ENCODE measurements at regions of chr13 and their contacts with region 1.

Region 1: GRCh38 chr13:42594970-42595571 is 21.1 kb downstream of the TNFSF11 start:
- DNase-seq: peak; percentile 48
- H3K4me3 ChIP-seq: no peak overlapping the region
- H3K27ac ChIP-seq: no peak overlapping the region
- H3K4me1 ChIP-seq: no peaks in the 10 kb centered on the region
- H3K27me3 ChIP-seq: no peaks in the 10 kb centered on the region
- CTCF ChIP-seq: peak; percentile 77 to 89

Region 2: DNA sequence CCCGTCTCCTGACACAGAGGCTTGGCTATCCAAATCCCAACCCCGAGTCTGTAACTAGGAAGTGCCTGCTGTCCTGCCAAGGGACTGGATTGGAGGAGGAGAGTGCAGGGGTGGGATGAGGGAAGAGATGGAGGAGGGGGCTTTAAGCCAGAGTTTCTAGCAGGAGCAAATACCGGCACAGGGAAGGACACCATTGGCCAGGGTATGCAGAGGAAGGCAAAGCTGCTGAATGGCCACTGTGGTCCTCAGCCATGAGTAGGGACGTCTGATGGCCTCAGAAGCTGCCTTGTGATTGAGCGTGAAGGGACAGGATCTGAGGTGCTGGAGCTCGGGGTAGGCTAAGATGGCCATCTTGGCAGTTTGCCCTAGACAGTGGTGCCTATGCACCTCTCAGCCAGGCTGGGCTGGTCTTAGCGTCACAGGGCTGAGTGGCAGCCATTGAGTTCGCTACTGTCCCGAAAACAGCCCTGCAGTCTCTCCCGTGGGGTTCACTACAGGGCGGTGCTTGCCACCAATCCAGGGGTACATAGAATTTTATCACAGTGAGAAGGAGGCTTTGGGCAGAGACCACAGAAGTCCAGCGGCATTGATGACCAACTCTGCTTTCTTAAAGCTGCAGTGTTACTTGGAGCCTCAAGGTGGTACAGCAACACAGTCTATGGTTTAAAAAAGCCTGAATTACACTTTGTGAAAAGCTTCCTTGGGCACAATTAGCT is 261.3 kb before region 1 on chr13:
- CTCF ChIA-PET with region 1: no interaction called
- dilution Hi-C with region 1: no loop called
- in situ Hi-C with region 1: loop called in 1 of 2 experiments (anchors 25 kb)
- intact Hi-C with region 1: loop called (anchors 2 kb)
- DNase-seq: peak; percentile 17
- H3K4me3 ChIP-seq: no peak overlapping the region
- H3K27ac ChIP-seq: no peak overlapping the region
- H3K4me1 ChIP-seq: no peaks in the 10 kb centered on the region
- H3K27me3 ChIP-seq: peaks cover 2% of the 10 kb centered on the region
- CTCF ChIP-seq: peak; percentile 44 to 60

Region 3: DNA sequence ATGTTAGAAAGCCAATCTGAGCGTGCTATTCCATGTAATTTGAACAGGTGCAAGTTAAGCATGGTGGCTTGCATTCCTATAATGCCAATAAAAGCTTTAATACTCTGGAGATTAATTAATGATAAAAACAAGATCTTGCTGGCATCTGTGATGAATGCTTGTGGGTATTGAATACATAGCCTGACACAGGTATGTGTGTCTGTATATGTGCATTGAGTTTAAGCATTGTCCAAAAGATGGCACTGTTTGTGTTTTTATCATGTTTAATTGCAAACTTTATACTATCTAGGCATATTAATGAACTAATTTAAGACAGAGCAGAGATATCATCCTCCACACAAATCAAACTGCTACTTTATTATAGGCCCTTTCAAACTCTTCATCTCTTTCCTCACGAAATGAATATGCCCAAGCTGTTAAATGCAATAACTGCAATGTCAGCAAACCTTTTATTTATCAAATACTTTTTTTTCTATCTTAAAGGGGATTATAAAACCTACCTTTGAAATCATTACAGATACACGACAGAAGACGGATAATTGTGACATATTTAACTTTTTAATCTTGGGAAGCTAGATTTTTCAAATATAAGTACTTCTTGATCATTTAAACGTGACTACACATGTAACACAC is 65.4 kb after region 1 on chr13:
- CTCF ChIA-PET with region 1: interaction called, 4 read pairs
- dilution Hi-C with region 1: no loop called
- in situ Hi-C with region 1: no loop called
- intact Hi-C with region 1: loop called (anchors 2 kb)
- DNase-seq: peak; percentile 6
- H3K4me3 ChIP-seq: no peak overlapping the region
- H3K27ac ChIP-seq: no peak overlapping the region
- H3K4me1 ChIP-seq: no peaks in the 10 kb centered on the region
- H3K27me3 ChIP-seq: peaks cover 2% of the 10 kb centered on the region
- CTCF ChIP-seq: peak; percentile 32 to 49

Region 4: DNA sequence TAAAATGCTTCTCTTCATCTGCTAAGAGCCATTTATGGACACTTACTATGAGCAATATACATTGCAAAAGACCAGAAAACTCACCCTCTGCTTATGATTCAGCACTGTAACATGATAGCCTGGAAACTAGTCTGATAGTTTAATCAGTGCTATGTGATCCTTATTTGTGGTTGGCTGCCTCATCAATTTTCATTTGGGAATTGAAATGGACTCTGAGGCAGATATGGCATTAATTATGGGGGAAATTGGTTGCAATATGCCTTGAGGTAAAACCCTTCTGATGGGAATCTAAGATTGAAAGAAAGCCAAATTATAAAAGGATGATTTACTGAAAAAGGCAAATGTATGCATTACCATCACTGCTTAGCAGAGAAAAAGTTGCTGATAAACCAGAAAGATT is 219.8 kb after region 1 on chr13:
- CTCF ChIA-PET with region 1: no interaction called
- dilution Hi-C with region 1: no loop called
- in situ Hi-C with region 1: no loop called
- intact Hi-C with region 1: loop called (anchors 1 kb)
- DNase-seq: peak; percentile 70
- H3K4me3 ChIP-seq: no peak overlapping the region
- H3K27ac ChIP-seq: no peak overlapping the region
- H3K4me1 ChIP-seq: peaks cover 10% of the 10 kb centered on the region
- H3K27me3 ChIP-seq: no peaks in the 10 kb centered on the region
- CTCF ChIP-seq: no peak

Region 5: DNA sequence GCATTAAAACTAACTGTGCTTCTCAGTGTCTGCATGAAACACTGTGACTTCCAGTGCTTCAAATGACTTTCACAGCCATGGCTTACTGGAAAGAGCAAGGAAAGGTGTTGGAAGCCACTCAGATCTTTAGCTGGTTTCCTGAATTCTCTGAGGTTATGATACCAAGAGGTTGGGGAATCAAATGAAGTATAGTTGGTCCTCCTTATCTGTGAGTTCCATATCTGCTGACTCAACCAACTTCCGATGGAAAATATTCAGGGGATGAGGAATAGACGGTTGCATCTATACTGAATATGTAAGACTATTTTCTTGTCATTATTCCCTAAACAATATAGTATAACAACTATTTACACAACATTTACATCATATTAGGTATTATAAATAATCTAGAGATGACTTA is 364.5 kb after region 1 on chr13:
- CTCF ChIA-PET with region 1: no interaction called
- dilution Hi-C with region 1: no loop called
- in situ Hi-C with region 1: no loop called
- intact Hi-C with region 1: loop called (anchors 2 kb)
- DNase-seq: no peak
- H3K4me3 ChIP-seq: no peak overlapping the region
- H3K27ac ChIP-seq: no peak overlapping the region
- H3K4me1 ChIP-seq: no peaks in the 10 kb centered on the region
- H3K27me3 ChIP-seq: no peaks in the 10 kb centered on the region
- CTCF ChIP-seq: no peak

Region 6: GRCh38 chr13:43132257-43132656 is 537.2 kb after region 1 on chr13:
- CTCF ChIA-PET with region 1: no interaction called
- dilution Hi-C with region 1: no loop called
- in situ Hi-C with region 1: no loop called
- intact Hi-C with region 1: loop called (anchors 5 kb)
- DNase-seq: peak; percentile 66
- H3K4me3 ChIP-seq: no peak overlapping the region
- H3K27ac ChIP-seq: no peak overlapping the region
- H3K4me1 ChIP-seq: peaks cover 9% of the 10 kb centered on the region
- H3K27me3 ChIP-seq: no peaks in the 10 kb centered on the region
- CTCF ChIP-seq: peak; percentile 35 to 59